Heart left ventricle (tissue), 16 donors: ENCODE measurements at regions of chr14 and their contacts with region 1.

Region 1: DNA sequence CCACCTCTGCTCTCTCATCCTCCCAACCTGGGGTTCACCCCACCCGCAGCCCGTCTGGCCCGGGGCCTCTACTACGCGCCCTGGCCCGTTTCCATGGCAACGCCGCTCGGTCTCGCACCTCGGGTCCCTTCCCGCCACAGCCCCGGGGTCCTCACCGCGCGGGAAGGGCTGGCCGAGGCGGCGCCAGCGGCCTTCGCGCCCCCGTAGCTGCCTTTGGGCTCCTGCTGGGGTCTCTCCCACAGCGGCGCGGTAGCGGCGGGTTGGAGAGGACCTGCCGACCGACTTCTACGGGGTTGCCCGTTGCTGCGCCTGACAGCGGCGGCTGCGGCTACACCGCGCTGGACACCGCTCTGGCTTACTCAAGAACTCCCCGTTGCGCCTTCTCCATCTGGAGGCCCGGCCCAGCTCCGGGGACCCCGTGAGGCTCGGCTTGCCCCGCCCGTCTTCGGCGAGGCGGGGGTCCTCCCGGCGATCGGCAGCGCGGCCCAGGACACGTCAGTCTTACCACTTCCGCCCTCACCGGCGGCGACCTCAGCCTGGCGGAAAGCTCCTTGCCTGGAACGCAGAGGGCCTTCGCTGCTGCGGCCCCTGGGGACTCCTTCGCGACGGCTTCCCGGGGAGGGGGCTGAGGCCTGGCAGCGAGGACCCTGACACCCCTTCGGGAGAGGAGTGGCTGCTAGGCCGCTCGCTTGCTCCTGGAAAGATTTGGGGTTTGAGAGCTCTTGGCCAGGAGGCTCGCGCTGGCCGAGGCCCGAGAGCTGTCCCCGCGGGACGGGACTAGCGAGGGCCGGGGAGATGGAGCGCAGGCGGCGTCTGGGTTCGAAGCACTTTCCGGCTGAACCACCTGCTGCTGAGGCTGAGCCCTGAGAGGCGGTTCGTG is at the start of gene TM9SF1:
- DNase-seq: peak; percentile 89 to 95 (median 93)
- ATAC-seq: peak; percentile 89 to 96 (median 94)
- H3K4me3 ChIP-seq: peak within 1 kb of the TSS; percentile 67 to 99 (median 92)
- H3K27ac ChIP-seq: peak within 1 kb of the TSS; percentile 95 to 100 (median 98)
- H3K4me1 ChIP-seq: peaks cover 2 to 51% (median 24%) of the 10 kb centered on the region in 12 donors
- H3K27me3 ChIP-seq: no peaks in the 10 kb centered on the region
- CTCF ChIP-seq: no peak
- POLR2A ChIP-seq: peak in 1 of 2 donors; percentile 68
- total RNA-seq, gene TM9SF1: 15.4 to 32.3 (median 26.3) TPM

Region 2: GRCh38 chr14:24171422-24172260 is 23.8 kb before region 1 on chr14 and contains the start of gene REC8:
- intact Hi-C with region 1: no loop called
- DNase-seq: peak; percentile 65 to 80 (median 75)
- ATAC-seq: peak; percentile 40 to 79 (median 70)
- H3K4me3 ChIP-seq: peak within 1 kb of the TSS in 11 of 12 donors; percentile 1 to 52 (median 33)
- H3K27ac ChIP-seq: peak within 1 kb of the TSS in 2 of 12 donors; percentile 37 to 42
- H3K4me1 ChIP-seq: peaks cover 0 to 33% (median 7%) of the 10 kb centered on the region in 12 donors
- H3K27me3 ChIP-seq: no peaks in the 10 kb centered on the region
- CTCF ChIP-seq: no peak
- POLR2A ChIP-seq: no peak
- total RNA-seq, gene REC8: 0.32 to 25.3 (median 4.4) TPM

Region 3: DNA sequence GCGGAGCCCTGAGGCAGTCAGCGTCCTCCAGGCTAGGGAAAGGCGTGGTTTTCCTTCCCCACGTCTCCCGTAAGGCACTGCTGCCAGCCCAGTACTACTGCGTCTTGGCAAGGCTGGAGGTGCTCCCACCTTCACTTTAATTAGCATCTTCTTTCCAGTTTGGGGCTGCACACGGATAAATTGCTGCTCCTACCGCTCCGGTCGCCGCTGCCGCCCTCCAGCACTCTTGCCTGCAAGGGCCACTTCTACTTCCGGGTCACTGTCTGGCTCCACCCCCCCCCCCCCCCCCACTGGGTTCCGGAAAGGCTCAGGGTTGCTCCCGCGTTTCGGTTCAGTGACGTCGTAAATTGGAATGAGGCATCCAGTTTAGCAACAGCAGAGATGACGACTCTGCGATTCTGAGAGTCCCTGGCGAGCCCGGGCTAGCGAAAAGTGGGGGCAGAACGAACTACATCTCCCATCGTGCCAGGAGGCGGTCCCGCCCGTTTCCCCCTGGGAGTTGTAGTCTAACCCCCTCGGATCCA is 36.8 kb after region 1 on chr14 and contains the start of gene NEDD8:
- intact Hi-C with region 1: loop called in 1 of 10 experiments (anchors 2 kb)
- DNase-seq: peak; percentile 92 to 95 (median 93)
- ATAC-seq: peak; percentile 89 to 93 (median 90)
- H3K4me3 ChIP-seq: peak within 1 kb of the TSS; percentile 55 to 99 (median 88)
- H3K27ac ChIP-seq: peak within 1 kb of the TSS; percentile 72 to 98 (median 93)
- H3K4me1 ChIP-seq: peaks cover 0 to 53% (median 31%) of the 10 kb centered on the region in 12 donors
- H3K27me3 ChIP-seq: no peaks in the 10 kb centered on the region
- CTCF ChIP-seq: no peak
- POLR2A ChIP-seq: peak in 1 of 2 donors; percentile 63
- total RNA-seq, gene NEDD8: 174 to 217 (median 197) TPM

Region 4: GRCh38 chr14:24271134-24271833 is 75.9 kb after region 1 on chr14 and contains the start of gene RABGGTA:
- intact Hi-C with region 1: no loop called
- DNase-seq: peak; percentile 89 to 94 (median 90)
- ATAC-seq: peak; percentile 91 to 96 (median 95)
- H3K4me3 ChIP-seq: peak within 1 kb of the TSS; percentile 67 to 98 (median 86)
- H3K27ac ChIP-seq: peak within 1 kb of the TSS; percentile 88 to 99 (median 98)
- H3K4me1 ChIP-seq: peaks cover 0 to 47% (median 12%) of the 10 kb centered on the region in 12 donors
- H3K27me3 ChIP-seq: no peaks in the 10 kb centered on the region
- CTCF ChIP-seq: peak; percentile 60 to 95 (median 78)
- POLR2A ChIP-seq: peak in 1 of 2 donors; percentile 71
- total RNA-seq, gene RABGGTA: 18.8 to 33.1 (median 26.7) TPM

Region 5: DNA sequence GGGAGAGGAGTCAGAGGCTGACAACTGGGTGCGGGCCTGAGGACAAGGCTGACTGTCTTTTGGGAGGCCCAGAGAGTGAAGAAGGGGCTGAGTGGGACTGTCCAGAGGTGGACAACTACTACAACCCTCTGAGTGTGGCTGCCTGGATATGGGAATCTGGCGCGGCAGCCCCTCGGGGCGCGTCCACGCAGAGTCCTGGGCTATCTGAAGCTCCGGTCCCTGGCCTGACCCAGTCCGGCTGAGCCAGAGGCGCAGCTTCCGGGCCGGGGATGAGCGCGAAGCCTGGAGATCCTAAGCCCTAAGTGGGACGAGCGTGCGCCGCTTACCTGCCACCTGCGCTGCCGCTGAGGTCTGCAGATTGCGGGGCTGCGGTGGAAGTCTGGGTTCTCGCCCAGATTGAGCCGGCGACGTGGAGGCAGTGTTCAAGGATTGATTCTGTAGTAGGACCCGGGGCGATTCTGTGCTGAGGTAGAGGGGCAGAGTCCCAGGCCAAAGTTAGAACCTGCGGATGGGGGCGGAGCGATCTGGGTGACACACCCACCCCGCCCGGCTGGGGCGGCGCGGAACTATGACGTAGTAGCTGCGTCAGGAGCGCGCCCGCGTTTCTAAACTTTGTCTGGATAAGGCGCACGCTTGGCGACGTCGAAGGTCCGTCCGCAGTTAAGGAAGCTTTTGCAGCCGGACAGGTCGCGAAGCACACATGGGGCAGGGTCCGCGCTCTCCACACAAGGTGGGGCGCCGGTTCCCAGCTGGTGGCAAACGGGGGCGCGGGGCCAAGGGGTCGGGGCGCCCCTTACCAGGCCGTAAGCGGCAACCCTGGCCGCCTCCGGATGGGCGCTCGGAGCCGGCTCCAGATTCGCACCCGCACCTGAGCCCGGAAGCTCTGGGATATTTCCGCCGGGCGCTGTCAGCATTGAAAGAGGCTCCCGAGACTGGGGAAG is 104.1 kb after region 1 on chr14 and contains the starts of genes DHRS1 and NOP9:
- intact Hi-C with region 1: no loop called
- DNase-seq: peak; percentile 90 to 96 (median 92)
- ATAC-seq: peak; percentile 83 to 94 (median 92)
- H3K4me3 ChIP-seq: peak within 1 kb of the TSS; percentile 75 to 99 (median 95)
- H3K27ac ChIP-seq: peak within 1 kb of the TSS; percentile 1 to 91 (median 80)
- H3K4me1 ChIP-seq: peaks cover 0 to 40% (median 24%) of the 10 kb centered on the region in 12 donors
- H3K27me3 ChIP-seq: no peaks in the 10 kb centered on the region
- CTCF ChIP-seq: no peak
- POLR2A ChIP-seq: peak in 1 of 2 donors; percentile 55
- total RNA-seq, gene DHRS1: 6.3 to 18.1 (median 11.3) TPM
- total RNA-seq, gene NOP9: 22.1 to 34.0 (median 27.8) TPM